ENCODE measurements at regions of chr22 and their contacts with region 1.

Region 1: DNA sequence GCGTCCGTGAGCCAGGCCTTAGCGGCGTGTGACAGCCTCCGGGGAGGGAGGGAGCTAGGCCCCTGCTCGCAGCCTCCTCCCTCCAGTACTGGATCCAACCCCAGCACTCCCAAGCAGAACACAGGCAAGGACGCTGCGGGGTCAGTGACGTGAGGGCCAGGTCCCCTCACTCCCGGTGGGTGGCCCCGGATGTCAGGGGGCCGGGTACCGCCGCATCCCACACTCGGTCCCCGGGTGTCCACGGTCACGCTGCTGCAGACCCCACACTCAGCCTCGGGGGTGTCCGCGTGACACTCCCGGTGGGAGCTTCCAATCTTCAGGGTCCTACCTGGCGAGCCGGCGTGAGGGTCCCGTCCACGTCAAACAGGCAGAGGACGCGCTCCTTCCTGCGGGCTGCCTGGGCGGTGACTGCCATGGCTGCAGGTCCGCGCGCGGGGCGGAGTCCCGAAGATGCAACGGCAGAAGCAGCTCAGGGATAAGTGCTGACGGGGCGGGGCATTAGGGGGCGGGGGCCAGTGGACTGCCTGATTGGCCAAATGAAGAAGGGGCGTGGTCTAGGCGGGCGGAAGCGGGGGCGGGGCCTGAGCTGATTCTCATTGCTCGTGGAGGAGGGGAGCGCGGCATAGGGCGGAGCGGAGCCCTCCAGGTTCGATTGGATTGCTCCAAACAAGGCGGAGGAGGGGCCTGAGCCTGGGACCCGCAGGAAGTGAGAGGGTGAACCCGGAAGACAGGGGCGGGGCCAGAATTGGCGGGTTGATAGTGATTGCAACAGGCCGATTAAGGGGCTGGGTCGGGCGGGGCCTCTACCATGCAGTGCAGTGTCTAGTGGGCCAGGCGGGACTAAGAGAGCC is at the start of gene PMM1:
- DNase-seq: peak; percentile 100
- H3K4me3 Mint-ChIP-seq: peak within 1 kb of the TSS; percentile 89
- H3K27ac Mint-ChIP-seq: peak within 1 kb of the TSS; percentile 92
- H3K4me1 Mint-ChIP-seq: peaks cover 30% of the 10 kb centered on the region
- H3K27me3 Mint-ChIP-seq: no peaks in the 10 kb centered on the region
- total RNA-seq, gene PMM1: 33.7 to 39.7 TPM

Region 2: DNA sequence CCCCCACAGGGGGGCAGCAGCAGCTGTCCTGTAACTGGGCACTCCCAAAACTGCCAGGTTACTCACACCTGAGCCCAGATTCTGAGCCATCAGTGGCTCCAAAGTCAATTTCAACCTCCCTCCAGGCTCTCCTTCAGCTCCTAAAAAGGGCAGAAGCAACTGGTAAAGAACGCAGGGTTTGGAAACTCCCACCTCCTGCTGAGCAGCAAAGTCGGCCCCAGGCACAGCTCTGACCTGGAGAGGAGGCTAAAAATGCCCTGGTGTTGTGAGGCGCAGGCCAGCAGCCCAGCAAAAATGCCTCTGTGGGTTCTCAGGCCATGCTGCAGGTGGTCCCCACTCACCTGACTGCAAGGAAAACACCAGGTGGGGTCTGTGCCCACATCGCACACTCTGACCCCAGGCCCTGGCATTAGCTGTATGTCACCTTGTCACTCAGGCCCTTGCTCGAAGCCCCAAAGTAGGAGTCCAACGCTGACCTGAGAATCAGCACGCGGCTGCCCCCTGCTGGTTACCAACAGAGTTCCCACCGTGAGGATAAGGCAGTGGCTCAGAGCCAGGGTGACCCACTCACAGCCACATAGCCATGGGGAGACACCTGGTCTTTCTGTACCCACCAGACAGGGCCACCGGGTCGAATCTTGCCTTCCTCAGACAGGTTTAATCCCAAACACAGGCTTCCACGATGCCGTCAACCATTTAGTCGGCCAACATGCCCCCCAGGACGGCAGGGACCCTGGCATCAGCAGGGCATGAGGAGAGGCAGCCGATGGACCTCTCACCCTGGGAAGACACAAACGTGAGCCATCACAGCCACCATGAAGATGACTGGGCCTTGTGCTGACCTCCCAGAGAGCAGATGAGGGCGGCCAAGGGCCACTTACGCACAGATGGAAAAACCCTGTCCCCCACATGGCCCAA is 56.4 kb before region 1 on chr22:
- CTCF ChIA-PET with region 1: no interaction called
- POLR2A ChIA-PET with region 1: no interaction called
- DNase-seq: peak; percentile 76
- H3K4me3 Mint-ChIP-seq: no peak overlapping the region
- H3K27ac Mint-ChIP-seq: peak overlapping the region; percentile 79
- H3K4me1 Mint-ChIP-seq: no peaks in the 10 kb centered on the region
- H3K27me3 Mint-ChIP-seq: no peaks in the 10 kb centered on the region

Region 3: GRCh38 chr22:41556561-41556960 is 33.1 kb before region 1 on chr22:
- CTCF ChIA-PET with region 1: no interaction called
- POLR2A ChIA-PET with region 1: no interaction called
- DNase-seq: no peak
- H3K4me3 Mint-ChIP-seq: no peak overlapping the region
- H3K27ac Mint-ChIP-seq: no peak overlapping the region
- H3K4me1 Mint-ChIP-seq: peaks cover 4% of the 10 kb centered on the region
- H3K27me3 Mint-ChIP-seq: peaks cover 20% of the 10 kb centered on the region

Region 4: GRCh38 chr22:41621099-41621910 is 31.7 kb after region 1 on chr22 and contains the start of gene XRCC6:
- CTCF ChIA-PET with region 1: interaction called, 10 read pairs
- POLR2A ChIA-PET with region 1: interaction called, 8 read pairs
- DNase-seq: peak; percentile 100
- H3K4me3 Mint-ChIP-seq: peak within 1 kb of the TSS; percentile 97
- H3K27ac Mint-ChIP-seq: peak within 1 kb of the TSS; percentile 98
- H3K4me1 Mint-ChIP-seq: peaks cover 41% of the 10 kb centered on the region
- H3K27me3 Mint-ChIP-seq: no peaks in the 10 kb centered on the region
- total RNA-seq, gene XRCC6: 283 TPM